H1 (cell line): ENCODE measurements at regions of chr3 and their contacts with region 1.

Region 1: GRCh38 chr3:14410503-14411165 is 8.2 kb downstream of the SLC6A6 start:
- DNase-seq: no peak
- H3K4me3 ChIP-seq: no peak overlapping the region
- H3K27ac ChIP-seq: no peak overlapping the region
- H3K4me1 ChIP-seq: peaks cover 15 to 28% (median 21%) of the 10 kb centered on the region in 4 experiments
- H3K27me3 ChIP-seq: no peaks in the 10 kb centered on the region
- CTCF ChIP-seq: no peak
- EP300 ChIP-seq: no peak
- POLR2A ChIP-seq: no peak
- RAD21 ChIP-seq: no peak

Region 2: GRCh38 chr3:14391033-14391432 is 19.6 kb before region 1 on chr3:
- CTCF ChIA-PET with region 1: interaction called, 12 read pairs
- POLR2A ChIA-PET with region 1: interaction called, 41 read pairs
- DNase-seq: no peak
- H3K4me3 ChIP-seq: no peak overlapping the region
- H3K27ac ChIP-seq: no peak overlapping the region
- H3K4me1 ChIP-seq: peaks cover 0 to 5% (median 3%) of the 10 kb centered on the region in 4 experiments; a peak in 6 of 7 replicates
- H3K27me3 ChIP-seq: no peaks in the 10 kb centered on the region
- CTCF ChIP-seq: no peak
- EP300 ChIP-seq: no peak
- POLR2A ChIP-seq: no peak
- RAD21 ChIP-seq: no peak

Region 3: GRCh38 chr3:14426063-14426620 is 15.5 kb after region 1 on chr3:
- CTCF ChIA-PET with region 1: interaction called, 17 read pairs
- POLR2A ChIA-PET with region 1: interaction called, 9 read pairs
- DNase-seq: no peak
- H3K4me3 ChIP-seq: no peak overlapping the region
- H3K27ac ChIP-seq: no peak overlapping the region
- H3K4me1 ChIP-seq: peaks cover 20 to 44% (median 36%) of the 10 kb centered on the region in 4 experiments
- H3K27me3 ChIP-seq: no peaks in the 10 kb centered on the region
- CTCF ChIP-seq: no peak
- EP300 ChIP-seq: no peak
- POLR2A ChIP-seq: no peak
- RAD21 ChIP-seq: no peak

Region 4: DNA sequence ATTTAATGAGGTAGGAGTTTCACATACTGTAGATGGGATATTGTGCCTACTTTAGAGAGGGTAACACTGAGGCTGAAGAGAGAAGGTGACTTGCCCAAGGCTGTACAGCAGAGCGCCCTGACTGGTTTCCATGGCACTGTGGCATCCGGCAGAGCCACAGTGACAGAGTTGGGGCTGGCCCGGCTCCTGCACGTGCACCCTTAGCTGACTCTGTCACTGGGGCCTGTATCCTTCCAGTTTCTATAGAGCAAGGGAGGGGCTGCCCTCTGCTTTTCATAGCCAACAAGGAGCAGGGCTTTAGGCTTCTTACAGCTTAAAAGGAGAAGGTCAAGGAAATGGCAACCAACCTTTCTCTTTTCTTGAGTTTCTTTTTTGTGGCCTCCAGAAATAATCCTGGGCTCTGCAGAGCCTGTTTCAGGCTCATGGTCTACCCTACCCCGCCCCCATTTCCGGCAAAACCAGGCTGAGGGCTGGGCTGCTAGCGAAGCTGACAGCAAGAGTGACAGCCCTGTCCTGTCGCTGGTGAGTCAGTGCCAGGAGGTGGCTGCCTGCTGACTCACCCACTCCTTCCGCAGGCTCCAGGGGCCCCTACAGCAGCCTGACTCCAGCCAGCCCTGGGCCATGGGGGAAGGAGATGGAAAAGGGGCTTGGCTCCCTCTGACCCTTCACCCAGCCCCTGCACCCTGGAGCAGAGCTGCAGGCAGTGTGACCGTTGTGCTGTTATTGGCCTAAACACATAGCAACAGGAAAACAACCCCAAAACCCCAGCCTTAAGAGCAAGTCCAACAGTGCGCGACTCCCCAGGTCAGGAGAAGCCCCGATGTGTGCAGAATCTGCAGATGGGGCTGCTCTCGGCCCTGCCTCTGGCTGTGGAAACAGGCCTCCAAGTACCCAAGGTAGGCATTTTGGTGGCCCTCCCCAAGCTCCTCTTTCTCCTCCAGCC is 21.5 kb after region 1 on chr3:
- CTCF ChIA-PET with region 1: interaction called, 16 read pairs
- POLR2A ChIA-PET with region 1: interaction called, 8 read pairs
- DNase-seq: no peak
- H3K4me3 ChIP-seq: no peak overlapping the region
- H3K27ac ChIP-seq: no peak overlapping the region; the same call in 1 of the 2 replicates
- H3K4me1 ChIP-seq: peaks cover 0 to 18% (median 5%) of the 10 kb centered on the region in 4 experiments; a peak in 5 of 7 replicates
- H3K27me3 ChIP-seq: no peaks in the 10 kb centered on the region
- CTCF ChIP-seq: no peak
- EP300 ChIP-seq: no peak
- POLR2A ChIP-seq: no peak
- RAD21 ChIP-seq: no peak

Region 5: GRCh38 chr3:14439579-14440518 is 29.2 kb after region 1 on chr3:
- CTCF ChIA-PET with region 1: interaction called, 11 read pairs
- POLR2A ChIA-PET with region 1: interaction called, 4 read pairs
- DNase-seq: no peak
- H3K4me3 ChIP-seq: no peak overlapping the region
- H3K27ac ChIP-seq: no peak overlapping the region
- H3K4me1 ChIP-seq: peaks cover 5 to 16% (median 12%) of the 10 kb centered on the region in 4 experiments
- H3K27me3 ChIP-seq: no peaks in the 10 kb centered on the region; a peak in 1 of 7 replicates
- CTCF ChIP-seq: no peak
- EP300 ChIP-seq: no peak
- POLR2A ChIP-seq: no peak
- RAD21 ChIP-seq: no peak

Region 6: DNA sequence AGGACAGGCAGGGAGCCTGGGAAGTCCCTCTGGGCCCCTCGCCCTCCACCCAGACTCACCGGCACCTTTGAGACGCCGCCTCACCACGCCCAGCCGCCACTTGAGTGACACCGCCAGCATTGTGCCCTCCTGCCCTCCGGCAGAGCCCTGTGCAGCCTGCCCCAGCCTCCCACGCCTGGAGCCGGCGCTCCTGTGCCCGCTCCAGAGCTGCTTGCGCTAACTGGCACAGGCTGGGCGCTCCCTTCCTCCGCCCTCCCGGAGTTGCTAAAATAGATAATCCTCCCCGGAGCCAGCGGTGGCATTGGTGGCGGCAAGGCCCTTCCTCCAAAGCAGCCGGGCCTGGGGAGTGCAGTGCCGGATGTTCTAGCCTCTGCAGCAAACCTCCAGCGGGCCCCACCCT is 145.2 kb after region 1 on chr3:
- CTCF ChIA-PET with region 1: no interaction called
- POLR2A ChIA-PET with region 1: no interaction called
- DNase-seq: peak in 1 of 2 experiments; percentile 80
- H3K4me3 ChIP-seq: peak overlapping the region in 1 of 4 experiments; percentile 39; a peak in 3 of 8 replicates
- H3K27ac ChIP-seq: no peak overlapping the region
- H3K4me1 ChIP-seq: peaks cover 0 to 18% (median 10%) of the 10 kb centered on the region in 4 experiments; a peak in 5 of 7 replicates
- H3K27me3 ChIP-seq: no peaks in the 10 kb centered on the region
- CTCF ChIP-seq: no peak
- EP300 ChIP-seq: no peak
- POLR2A ChIP-seq: no peak
- RAD21 ChIP-seq: no peak